Activated CD8-positive, alpha-beta memory T cell treated with anti-CD3 and anti-CD28 coated beads, Interleukin-2, amount 10 ng/mL, durations not matched to agents 7 days and 5 days (primary cell): ENCODE measurements at regions of chr17 and their contacts with region 1.

Region 1: GRCh38 chr17:75109407-75110233 is at the start of gene ARMC7:
- DNase-seq: peak; percentile 93
- ATAC-seq: peak; percentile 88
- H3K4me3 Mint-ChIP-seq: peak within 1 kb of the TSS; percentile 88
- H3K27ac Mint-ChIP-seq: peak within 1 kb of the TSS; percentile 90
- H3K4me1 Mint-ChIP-seq: peaks cover 35% of the 10 kb centered on the region
- H3K27me3 Mint-ChIP-seq: no peaks in the 10 kb centered on the region
- total RNA-seq, gene ARMC7: 13.5 to 14.5 TPM

Region 2: DNA sequence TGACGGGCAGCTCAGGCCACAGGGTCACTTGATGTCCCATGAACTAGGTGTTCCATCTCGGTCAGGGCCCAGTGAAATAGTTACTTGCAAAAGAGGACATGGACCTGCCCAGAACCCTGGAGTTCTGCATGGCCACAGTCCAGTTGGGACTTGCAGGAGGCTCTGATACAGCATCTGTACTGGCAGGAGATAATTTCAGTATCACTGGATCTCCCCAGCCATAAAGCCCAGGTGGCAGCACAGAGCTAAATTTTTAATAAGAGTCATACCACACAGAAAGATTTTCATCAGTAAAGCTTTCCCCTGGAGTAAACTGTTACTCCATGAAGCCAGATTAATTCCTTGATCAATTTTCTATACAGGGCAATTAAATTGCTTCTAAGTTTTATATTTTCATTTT is 39.8 kb before region 1 on chr17:
- CTCF ChIA-PET with region 1: interaction called, 15 read pairs
- DNase-seq: no peak
- ATAC-seq: no peak
- H3K4me3 Mint-ChIP-seq: no peak overlapping the region
- H3K27ac Mint-ChIP-seq: no peak overlapping the region
- H3K4me1 Mint-ChIP-seq: peaks cover 25% of the 10 kb centered on the region
- H3K27me3 Mint-ChIP-seq: no peaks in the 10 kb centered on the region

Region 3: DNA sequence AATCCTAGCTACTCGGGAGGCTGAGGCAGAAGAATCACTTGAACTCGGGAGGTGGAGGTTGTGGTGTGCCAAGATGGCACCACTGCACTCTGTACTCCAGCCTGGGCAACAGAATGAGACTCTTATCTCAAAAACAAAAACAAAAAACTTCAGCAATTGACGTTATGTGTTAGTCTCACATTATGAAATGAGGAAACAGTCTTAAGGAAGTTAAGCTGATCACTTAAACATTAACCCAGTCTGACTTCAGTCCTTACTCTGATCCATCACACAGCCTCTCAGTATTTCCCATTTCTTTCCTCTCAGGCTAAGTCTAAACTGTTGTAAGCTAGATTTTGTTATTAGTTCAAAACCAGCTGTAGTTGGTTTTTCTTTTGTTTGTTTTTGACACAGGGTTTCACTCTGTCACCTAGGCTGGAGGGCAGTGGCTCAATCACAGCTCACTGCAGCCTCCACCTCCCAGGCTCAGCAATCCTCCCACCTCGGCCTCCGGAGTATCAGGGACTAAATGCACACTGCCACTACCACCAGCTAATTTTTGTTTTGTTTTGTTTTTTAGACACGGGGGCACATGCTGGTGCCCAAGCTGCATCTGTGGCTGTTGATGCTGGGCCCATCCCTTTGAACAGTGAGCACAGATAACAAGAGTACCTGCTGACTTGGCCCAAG is 38.4 kb after region 1 on chr17:
- CTCF ChIA-PET with region 1: interaction called, 10 read pairs
- DNase-seq: no peak
- ATAC-seq: no peak
- H3K4me3 Mint-ChIP-seq: no peak overlapping the region
- H3K27ac Mint-ChIP-seq: peak overlapping the region; percentile 48
- H3K4me1 Mint-ChIP-seq: peaks cover 39% of the 10 kb centered on the region
- H3K27me3 Mint-ChIP-seq: no peaks in the 10 kb centered on the region

Region 4: DNA sequence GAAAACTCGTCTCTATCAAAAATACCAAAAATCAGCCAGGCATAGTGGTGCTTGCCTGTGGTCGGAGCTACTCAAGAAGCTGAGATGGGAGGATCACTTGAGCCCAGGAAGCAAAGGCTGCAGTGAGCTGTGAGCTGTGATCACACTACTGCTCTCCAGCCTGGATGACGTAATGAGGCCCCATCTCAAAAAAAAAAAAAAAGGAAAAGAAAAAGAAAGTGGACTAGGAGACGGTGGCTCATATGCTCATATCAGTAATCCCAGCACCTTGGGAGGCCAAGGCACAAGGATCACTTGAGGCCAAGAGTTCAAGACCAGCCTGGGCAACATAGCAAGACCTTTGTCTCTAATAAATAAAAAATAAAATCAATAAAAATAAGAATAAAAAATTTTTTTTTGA is 82.0 kb after region 1 on chr17:
- CTCF ChIA-PET with region 1: interaction called, 30 read pairs
- DNase-seq: no peak
- ATAC-seq: no peak
- H3K4me3 Mint-ChIP-seq: no peak overlapping the region
- H3K27ac Mint-ChIP-seq: no peak overlapping the region
- H3K4me1 Mint-ChIP-seq: peaks cover 13% of the 10 kb centered on the region
- H3K27me3 Mint-ChIP-seq: no peaks in the 10 kb centered on the region

Region 5: GRCh38 chr17:75238684-75239191 is 129.1 kb after region 1 on chr17:
- CTCF ChIA-PET with region 1: interaction called, 26 read pairs
- DNase-seq: peak; percentile 72
- ATAC-seq: peak; percentile 74
- H3K4me3 Mint-ChIP-seq: no peak overlapping the region
- H3K27ac Mint-ChIP-seq: peak overlapping the region; percentile 70
- H3K4me1 Mint-ChIP-seq: peaks cover 32% of the 10 kb centered on the region
- H3K27me3 Mint-ChIP-seq: no peaks in the 10 kb centered on the region

Region 6: GRCh38 chr17:75271233-75271954 is 161.8 kb after region 1 on chr17:
- CTCF ChIA-PET with region 1: interaction called, 12 read pairs
- DNase-seq: peak; percentile 90
- ATAC-seq: peak; percentile 87
- H3K4me3 Mint-ChIP-seq: peak overlapping the region; percentile 86
- H3K27ac Mint-ChIP-seq: peak overlapping the region; percentile 86
- H3K4me1 Mint-ChIP-seq: peaks cover 37% of the 10 kb centered on the region
- H3K27me3 Mint-ChIP-seq: no peaks in the 10 kb centered on the region